Adrenal gland (tissue), 19 donors: ENCODE measurements at regions of chr3 and their contacts with region 1.

Region 1: DNA sequence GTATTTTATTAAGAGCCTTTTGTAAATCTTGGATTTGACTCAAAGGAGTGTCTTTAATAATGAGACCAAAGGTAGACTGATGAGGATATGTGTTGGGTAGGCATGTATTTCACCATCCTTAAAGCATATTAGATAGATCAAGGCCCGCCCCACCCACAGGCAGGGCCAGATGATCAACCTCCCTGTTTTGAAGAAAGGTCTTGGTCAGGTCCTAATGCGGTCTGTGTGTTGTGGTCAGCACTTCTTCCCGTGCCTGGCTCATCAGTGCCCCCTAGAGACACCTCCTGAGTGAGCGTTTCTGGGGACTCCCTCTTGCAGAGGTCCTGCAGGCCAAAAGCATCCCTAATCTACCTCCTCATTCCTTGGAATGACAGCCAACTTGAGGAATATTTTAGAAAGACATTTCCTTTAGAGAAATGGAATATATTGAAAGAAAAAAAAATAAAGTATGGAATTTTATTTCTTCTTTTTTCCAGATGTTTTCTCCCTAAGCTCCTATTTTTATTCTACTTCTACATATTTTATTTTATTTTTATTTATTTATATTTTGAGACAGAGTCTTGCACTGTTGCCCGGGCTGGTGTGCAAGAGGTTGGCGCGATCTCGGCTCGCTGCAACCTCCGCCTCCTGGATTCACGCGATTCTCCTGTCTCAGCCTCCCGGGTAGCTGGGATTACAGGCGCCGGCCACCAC is 6.0 kb downstream of the TM4SF4 start:
- DNase-seq: peak; percentile 74 to 92 (median 81)
- H3K4me3 ChIP-seq: no peak overlapping the region
- H3K27ac ChIP-seq: peak overlapping the region in 2 of 5 donors; percentile 26 to 73
- H3K4me1 ChIP-seq: no peaks in the 10 kb centered on the region
- H3K27me3 ChIP-seq: no peaks in the 10 kb centered on the region
- CTCF ChIP-seq: peak; percentile 52 to 87 (median 75)
- POLR2A ChIP-seq: no peak

Region 2: DNA sequence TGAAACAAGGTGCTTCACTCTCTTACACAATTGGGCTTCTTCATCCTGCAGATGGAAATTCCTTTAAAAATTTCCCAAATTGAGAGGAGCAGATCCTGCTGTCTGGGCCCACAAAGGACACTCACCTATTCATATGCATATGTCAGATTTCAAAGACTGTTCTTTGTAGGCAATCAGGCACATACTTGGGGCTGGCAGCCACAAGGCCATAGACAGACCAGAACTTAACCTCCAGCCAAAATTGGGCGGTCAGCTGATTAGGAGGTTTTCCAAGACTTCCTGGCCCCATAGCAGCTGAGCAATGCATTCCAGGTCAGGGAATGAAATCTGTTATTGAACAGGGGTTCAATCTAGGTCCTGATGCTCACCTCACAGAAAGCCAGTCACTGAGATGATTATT is 366.0 kb before region 1 on chr3:
- intact Hi-C with region 1: loop called in 1 of 2 experiments (anchors 10 kb)
- DNase-seq: peak in 2 of 7 donors; percentile 28 to 38
- H3K4me3 ChIP-seq: no peak overlapping the region
- H3K27ac ChIP-seq: no peak overlapping the region
- H3K4me1 ChIP-seq: no peaks in the 10 kb centered on the region
- H3K27me3 ChIP-seq: no peaks in the 10 kb centered on the region
- CTCF ChIP-seq: no peak
- POLR2A ChIP-seq: no peak

Region 3: DNA sequence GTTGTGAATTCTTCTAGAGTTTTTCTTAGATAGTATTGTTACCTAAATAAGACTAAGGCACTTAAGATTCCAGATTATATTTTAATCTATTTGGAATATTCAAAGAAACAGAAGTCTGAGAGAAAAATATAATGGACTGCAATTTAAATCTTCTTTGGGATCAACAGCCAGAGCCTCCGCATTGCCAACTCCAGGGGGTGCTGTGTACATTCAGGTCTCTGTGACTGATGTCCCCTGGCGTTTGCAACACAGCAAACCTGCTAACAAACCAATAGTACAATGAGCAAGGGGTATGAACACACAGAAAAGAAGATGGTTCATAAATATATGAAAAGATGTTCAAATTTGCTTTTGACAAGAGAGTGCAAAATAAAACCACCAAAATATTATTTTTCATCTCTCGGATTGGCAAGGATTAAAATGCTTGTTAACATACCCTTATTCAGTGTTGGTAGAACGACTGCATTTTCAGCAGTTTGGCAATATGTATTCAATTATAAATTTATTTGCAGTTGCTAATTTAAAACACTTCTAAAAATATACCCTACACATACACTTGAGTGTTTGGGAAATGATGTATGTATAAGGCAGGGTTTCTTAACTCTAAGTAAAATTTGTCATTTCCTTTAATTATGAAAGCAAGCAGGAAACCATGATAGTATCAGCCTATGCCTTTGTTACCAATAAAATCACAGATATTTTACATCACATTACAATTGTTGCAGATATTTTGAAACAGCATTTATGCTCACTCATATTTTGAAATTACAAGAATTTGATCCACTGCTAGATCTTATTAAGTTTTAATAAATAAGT is 86.9 kb before region 1 on chr3:
- intact Hi-C with region 1: loop called in 1 of 2 experiments (anchors 5 kb)
- DNase-seq: peak; percentile 49 to 85 (median 69)
- H3K4me3 ChIP-seq: no peak overlapping the region
- H3K27ac ChIP-seq: no peak overlapping the region
- H3K4me1 ChIP-seq: peaks cover 0 to 16% of the 10 kb centered on the region in 2 donors
- H3K27me3 ChIP-seq: no peaks in the 10 kb centered on the region
- CTCF ChIP-seq: peak; percentile 55 to 76 (median 68)
- POLR2A ChIP-seq: no peak